Sigmoid colon (tissue), 7 donors: ENCODE measurements at regions of chr15 and their contacts with region 1.

Region 1: DNA sequence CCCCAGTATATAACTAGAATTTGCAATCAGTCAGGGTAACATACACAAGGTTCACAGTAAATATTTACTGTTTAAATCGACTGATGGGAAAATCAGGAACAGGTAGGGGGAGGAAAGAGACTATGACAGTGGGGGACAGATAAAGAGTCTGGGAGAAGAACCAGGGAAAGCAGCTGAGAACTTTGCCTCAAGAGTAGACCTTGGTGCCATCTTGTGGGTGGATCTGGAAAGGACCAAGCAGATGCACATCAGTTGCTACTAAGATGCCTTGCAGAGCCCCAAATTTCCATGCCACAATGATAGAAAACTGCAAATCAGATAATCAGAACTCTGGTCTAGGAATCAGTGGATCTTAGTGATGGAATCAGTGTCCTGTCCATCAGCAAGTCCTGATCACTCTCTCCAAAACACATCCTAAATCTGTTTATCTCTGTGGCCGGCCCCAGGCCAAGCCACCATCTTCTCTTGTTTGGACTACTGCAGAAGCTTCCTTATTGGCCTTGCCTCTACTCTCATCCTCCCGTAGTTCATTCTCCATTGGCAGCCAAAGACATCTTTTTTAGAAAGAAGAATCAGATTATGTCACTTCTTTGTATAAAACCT is 62.7 kb downstream of the PDE8A start:
- DNase-seq: peak; percentile 77
- H3K4me3 ChIP-seq: no peak overlapping the region
- H3K27ac ChIP-seq: peak overlapping the region in 1 of 4 donors; percentile 1
- H3K4me1 ChIP-seq: peaks cover 0 to 17% (median 6%) of the 10 kb centered on the region in 4 donors
- H3K27me3 ChIP-seq: no peaks in the 10 kb centered on the region
- CTCF ChIP-seq: peak; percentile 51 to 67 (median 60)
- EP300 ChIP-seq: no peak
- POLR2A ChIP-seq: no peak

Region 2: DNA sequence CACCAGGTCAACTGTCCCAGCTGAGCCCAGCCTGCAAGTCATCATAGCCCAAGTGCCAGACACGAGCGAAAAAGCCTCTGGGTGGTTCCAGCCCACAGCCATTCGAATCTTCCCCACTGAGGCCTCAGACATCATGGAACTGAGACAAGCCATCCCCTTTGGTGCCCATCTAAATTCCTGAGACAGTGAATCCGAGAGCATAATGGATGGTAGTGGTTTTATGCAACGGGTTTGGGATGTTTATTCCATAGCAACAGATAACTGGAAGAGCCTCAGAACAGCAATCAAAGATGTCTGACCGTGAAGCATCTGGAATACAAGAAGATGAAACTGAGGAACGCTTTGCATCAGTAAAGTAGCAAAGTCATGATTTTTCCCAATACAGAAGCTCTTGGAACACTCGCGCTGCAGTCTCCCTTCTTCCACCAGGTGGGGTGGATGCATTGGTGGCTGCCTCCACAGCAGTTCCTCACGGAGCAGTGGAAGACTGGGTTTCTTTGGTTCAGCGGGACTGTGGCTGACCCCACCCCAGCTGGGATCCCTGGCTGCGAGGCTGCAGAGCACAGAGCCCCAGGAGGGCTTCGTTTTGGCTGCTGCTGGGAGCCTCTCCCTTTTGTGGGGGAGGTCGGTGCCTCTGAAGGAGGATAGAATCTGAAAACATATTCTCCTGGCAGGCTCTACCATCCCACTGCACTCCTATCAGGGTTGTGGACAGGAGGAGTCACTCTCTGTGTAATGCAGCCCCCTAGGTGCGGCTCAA is 89.1 kb before region 1 on chr15:
- intact Hi-C with region 1: loop called (anchors 1 kb)
- DNase-seq: peak; percentile 87
- H3K4me3 ChIP-seq: peak overlapping the region in 3 of 4 donors; percentile 14 to 31 (median 31)
- H3K27ac ChIP-seq: peak overlapping the region in 1 of 4 donors; percentile 32
- H3K4me1 ChIP-seq: peaks cover 0 to 8% (median 4%) of the 10 kb centered on the region in 4 donors
- H3K27me3 ChIP-seq: no peaks in the 10 kb centered on the region
- CTCF ChIP-seq: peak; percentile 81 to 88 (median 85)
- EP300 ChIP-seq: no peak
- POLR2A ChIP-seq: no peak